ENCODE measurements at regions of chr10 and their contacts with region 1.

Region 1: DNA sequence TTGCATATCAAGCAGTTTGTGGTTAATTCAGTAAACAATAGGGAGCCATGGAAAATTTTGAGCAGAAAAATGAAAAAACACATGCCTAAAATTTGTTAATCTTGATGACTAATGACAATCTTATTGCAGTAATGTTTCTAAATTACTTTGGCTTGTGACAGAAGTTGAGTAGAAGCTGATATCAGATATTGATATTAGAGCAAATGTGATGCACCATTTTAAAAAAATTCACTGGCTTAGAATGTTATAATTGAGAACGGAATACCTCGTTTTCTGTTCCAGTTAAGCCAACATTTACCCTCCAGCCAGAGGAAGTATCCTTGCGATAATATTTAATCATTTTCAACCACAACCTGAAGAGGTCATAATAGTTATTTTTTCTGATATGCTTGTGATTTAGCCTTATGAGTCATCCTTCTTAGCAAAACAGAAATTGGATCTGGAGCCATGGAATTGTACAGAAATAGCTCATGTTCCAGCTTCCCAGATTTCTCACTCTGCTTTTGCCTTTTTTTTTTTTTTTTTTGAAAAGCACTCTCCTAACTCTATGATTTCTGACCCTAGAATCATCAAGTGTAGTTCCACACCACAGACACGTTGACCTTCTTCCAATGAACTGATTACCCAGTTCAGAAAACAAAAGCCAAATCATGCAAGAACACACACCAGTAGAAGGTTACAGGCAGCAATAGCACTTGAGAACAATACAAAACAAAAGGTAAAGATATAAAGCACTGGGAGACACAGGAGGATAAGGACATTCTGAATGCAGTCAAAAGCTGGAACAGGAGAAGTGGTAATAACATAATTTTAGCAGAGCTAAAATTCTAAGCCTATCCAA is 96.8 kb upstream of the PHYHIPL start:
- DNase-seq: no peak
- H3K4me3 ChIP-seq: no peak overlapping the region
- H3K27ac ChIP-seq: peak overlapping the region; percentile 57 to 72
- H3K4me1 ChIP-seq: no peaks in the 10 kb centered on the region
- H3K27me3 ChIP-seq: no peaks in the 10 kb centered on the region
- CTCF ChIP-seq: no peak
- POLR2A ChIP-seq: no peak

Region 2: DNA sequence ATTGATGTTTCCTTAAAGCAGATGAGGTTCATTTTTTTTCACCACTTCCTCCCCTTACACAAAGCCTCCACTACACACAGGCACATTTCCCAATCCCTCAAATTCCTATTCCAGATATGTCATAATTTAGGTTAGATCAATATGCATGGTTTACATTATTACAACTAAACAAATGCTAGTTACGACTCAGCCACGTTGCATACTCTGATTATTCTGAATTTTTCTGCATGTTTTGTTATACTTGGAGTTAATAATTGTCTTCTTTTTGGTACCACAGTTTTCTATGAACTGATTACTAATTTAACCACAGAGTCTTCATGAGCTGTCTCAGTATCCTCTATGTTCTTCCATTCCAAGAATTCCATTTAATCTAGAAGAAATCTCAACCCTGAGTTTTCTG is 571.3 kb before region 1 on chr10:
- intact Hi-C with region 1: loop called (anchors 10 kb)
- DNase-seq: no peak
- H3K4me3 ChIP-seq: no peak overlapping the region
- H3K27ac ChIP-seq: no peak overlapping the region
- H3K4me1 ChIP-seq: no peaks in the 10 kb centered on the region
- H3K27me3 ChIP-seq: no peaks in the 10 kb centered on the region
- CTCF ChIP-seq: no peak
- POLR2A ChIP-seq: no peak